ENCODE measurements at regions of chr9 and their contacts with region 1.

Region 1: DNA sequence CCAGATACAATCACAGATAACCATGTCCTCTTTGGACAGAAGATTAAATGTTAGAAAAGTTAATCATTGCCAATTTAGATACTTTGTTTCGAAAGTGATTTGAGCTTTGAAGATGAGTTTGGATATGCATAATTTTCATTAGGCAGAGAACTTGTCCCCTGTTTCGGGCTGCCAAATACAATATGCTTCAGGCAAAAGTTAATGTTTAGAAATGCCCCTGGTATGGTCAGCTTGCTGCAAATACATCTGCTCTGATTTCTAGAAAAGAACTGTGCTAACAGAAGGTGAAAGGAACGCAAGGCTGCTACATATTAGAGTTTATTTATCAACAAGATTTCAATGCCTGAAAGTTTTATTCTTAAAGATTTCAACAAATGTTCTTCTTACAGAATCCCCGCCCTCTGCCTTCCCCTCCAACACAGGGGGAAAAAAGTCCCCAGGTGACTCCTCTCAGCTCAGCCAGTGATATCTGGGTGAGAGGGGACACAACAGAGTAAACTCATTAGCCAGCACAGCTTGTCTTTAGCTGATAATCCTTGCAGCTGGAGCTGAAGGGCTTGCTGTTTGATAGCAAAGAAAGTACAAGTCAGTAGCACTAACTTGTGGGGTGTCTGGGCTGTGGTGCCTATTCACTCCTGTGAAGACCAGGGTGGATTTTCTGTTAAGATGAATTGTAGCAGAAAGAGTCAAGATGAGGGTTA is 435.7 kb downstream of the DMAC1 start:
- DNase-seq: no peak
- CTCF ChIP-seq: no peak

Region 2: DNA sequence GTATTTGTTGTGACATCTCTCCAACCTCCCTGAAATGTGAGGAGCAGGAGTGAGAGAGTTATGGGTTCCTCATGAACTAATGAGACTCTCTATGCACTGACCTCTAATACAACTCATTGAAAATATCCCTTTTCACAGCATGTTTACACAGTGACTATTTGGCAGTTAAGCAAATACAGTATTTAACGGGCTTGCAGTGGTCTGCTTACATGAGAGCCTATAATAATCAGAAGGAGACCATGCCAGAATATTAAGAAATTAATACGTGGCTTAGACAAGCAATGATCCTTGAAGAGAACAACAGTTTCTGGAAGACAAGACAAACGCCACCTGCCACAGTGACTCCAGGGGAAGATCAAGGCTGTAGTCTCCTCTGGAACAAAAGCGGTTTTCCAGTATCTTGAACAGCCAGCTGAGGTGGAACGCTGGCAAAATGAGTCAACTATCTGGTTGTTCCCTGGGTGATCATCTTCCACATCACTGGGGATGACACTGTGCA is 11.1 kb after region 1 on chr9:
- CTCF ChIA-PET with region 1: interaction called, 19 read pairs
- POLR2A ChIA-PET with region 1: no interaction called
- DNase-seq: no peak
- CTCF ChIP-seq: no peak